A673 (cell line): ENCODE measurements at regions of chr10 and their contacts with region 1.

Region 1: GRCh38 chr10:17633353-17633752 is 10.6 kb upstream of the STAM start:
- DNase-seq: no peak
- H3K4me3 ChIP-seq: no peak overlapping the region
- H3K27ac ChIP-seq: no peak overlapping the region
- H3K4me1 ChIP-seq: no peaks in the 10 kb centered on the region
- H3K27me3 ChIP-seq: no peaks in the 10 kb centered on the region
- CTCF ChIP-seq: no peak

Region 2: DNA sequence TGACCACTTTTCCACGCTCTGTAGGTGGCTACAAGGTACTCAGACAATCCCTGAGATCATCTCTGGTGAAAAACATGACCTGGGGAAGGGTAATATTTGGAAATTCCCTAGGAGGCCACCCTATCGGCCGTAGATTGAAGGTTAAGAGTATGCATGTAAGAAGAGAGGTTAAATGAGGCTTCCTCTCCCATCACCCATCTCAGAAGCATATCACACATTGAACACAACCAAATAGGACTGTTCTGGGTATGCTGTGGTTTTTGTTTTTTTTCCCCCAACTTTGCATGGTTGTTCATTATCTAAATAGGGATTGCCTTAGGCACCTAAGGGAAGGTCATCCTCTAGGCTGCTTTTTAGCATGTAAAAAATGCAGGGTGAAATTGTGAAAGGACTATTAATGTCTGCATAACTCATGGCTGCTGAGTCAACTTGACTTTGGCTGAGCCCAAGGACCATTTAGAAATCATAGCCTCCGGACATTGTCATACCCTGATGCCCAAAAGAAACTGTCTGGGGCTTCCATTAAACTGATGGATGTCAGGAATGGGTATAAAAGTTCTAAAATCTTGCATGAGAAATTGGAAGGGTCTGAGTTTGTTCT is 154.2 kb before region 1 on chr10:
- CTCF ChIA-PET with region 1: no interaction called
- POLR2A ChIA-PET with region 1: no interaction called
- intact Hi-C with region 1: no loop called
- DNase-seq: no peak
- H3K4me3 ChIP-seq: no peak overlapping the region
- H3K27ac ChIP-seq: no peak overlapping the region
- H3K4me1 ChIP-seq: no peaks in the 10 kb centered on the region
- H3K27me3 ChIP-seq: peaks cover 6% of the 10 kb centered on the region
- CTCF ChIP-seq: no peak

Region 3: DNA sequence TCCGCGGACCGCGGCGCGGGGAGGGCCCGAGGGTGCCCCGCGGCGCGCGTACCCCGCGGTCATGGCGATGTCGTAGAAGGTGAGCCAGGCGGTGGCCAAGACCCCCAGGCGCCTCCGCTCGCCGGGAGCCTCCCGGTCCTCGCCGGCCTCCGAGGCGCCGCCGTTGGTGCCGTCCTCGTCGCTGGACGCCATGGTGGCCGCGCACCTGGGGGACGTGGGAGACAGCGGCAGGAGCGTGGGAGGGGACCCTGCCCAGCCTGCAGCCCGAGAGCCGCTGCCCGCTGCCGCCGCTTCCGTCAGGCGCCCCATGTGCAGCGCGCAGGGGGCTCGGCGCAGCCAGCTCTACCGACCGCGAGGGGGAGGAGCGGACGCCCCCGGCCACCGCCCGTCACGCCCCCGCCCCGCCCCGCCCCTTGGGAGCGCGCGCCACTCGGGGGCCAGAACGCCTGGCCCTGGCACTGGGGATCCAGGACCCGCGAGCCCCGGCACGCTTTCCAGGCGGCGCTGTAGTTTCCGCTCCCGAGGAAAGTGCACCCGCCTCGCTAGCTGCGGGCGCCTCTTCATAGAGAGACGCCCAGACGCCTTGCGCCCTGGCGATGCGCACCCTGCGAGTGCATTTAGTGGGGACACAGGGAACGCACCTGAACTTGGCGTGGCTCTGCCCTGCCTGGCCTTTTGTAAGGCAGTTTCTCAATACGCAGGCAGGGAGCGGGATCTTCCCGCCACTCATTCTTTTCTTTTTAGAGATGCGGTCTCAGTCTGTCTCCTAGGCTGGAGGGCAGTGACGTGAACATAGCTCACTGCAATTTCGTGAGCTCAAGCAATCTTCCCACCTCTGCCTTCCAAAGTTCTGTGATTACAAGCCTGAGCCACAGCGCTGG is 16.1 kb before region 1 on chr10 and contains the start of gene HACD1:
- CTCF ChIA-PET with region 1: interaction called, 10 read pairs
- POLR2A ChIA-PET with region 1: no interaction called
- intact Hi-C with region 1: no loop called
- DNase-seq: peak; percentile 89
- H3K4me3 ChIP-seq: peak within 1 kb of the TSS; percentile 84
- H3K27ac ChIP-seq: peak within 1 kb of the TSS; percentile 57
- H3K4me1 ChIP-seq: no peaks in the 10 kb centered on the region
- H3K27me3 ChIP-seq: no peaks in the 10 kb centered on the region
- CTCF ChIP-seq: peak; percentile 43
- total RNA-seq, gene HACD1: 13.6 and 14.1 TPM in 2 replicates

Region 4: GRCh38 chr10:17673456-17674061 is 40.2 kb after region 1 on chr10:
- CTCF ChIA-PET with region 1: no interaction called
- POLR2A ChIA-PET with region 1: no interaction called
- intact Hi-C with region 1: no loop called
- DNase-seq: peak; percentile 88
- H3K4me3 ChIP-seq: no peak overlapping the region
- H3K27ac ChIP-seq: peak overlapping the region; percentile 47
- H3K4me1 ChIP-seq: peaks cover 33% of the 10 kb centered on the region
- H3K27me3 ChIP-seq: no peaks in the 10 kb centered on the region
- CTCF ChIP-seq: no peak

Region 5: GRCh38 chr10:18214691-18215563 is 581.6 kb after region 1 on chr10:
- CTCF ChIA-PET with region 1: no interaction called
- POLR2A ChIA-PET with region 1: no interaction called
- intact Hi-C with region 1: no loop called
- DNase-seq: peak; percentile 85
- H3K4me3 ChIP-seq: no peak overlapping the region
- H3K27ac ChIP-seq: peak overlapping the region; percentile 63
- H3K4me1 ChIP-seq: peaks cover 45% of the 10 kb centered on the region
- H3K27me3 ChIP-seq: no peaks in the 10 kb centered on the region
- CTCF ChIP-seq: peak; percentile 91